CD4-positive, alpha-beta T cell (primary cell): ENCODE measurements at regions of chr14 and their contacts with region 1.

Region 1: GRCh38 chr14:52741865-52742264 is 11.9 kb downstream of the STYX start:
- DNase-seq: peak in 4 of 14 experiments; percentile 21 to 65 (median 46)
- ATAC-seq: peak; percentile 63
- H3K4me3 ChIP-seq: peak overlapping the region; percentile 41
- H3K4me3 Mint-ChIP-seq: peak overlapping the region; percentile 76
- H3K27ac ChIP-seq: peak overlapping the region; percentile 77 to 81
- H3K27ac Mint-ChIP-seq: peak overlapping the region; percentile 98
- H3K4me1 ChIP-seq: peaks cover 39% of the 10 kb centered on the region
- H3K4me1 Mint-ChIP-seq: peaks cover 83% of the 10 kb centered on the region
- H3K27me3 ChIP-seq: no peaks in the 10 kb centered on the region
- H3K27me3 Mint-ChIP-seq: no peaks in the 10 kb centered on the region
- CTCF ChIP-seq: no peak

Region 2: GRCh38 chr14:52552063-52552988 is 189.5 kb before region 1 on chr14 and contains the starts of genes GPR137C and TXNDC16:
- CTCF ChIA-PET with region 1: no interaction called
- POLR2A ChIA-PET with region 1: interaction called, 18 read pairs
- intact Hi-C with region 1: loop called in 1 of 2 experiments (anchors 5 kb)
- DNase-seq: peak; percentile 98 to 100 (median 99)
- ATAC-seq: peak; percentile 85
- H3K4me3 ChIP-seq: peak within 1 kb of the TSS; percentile 95
- H3K4me3 Mint-ChIP-seq: peak within 1 kb of the TSS; percentile 98
- H3K27ac ChIP-seq: peak within 1 kb of the TSS; percentile 80 to 88
- H3K27ac Mint-ChIP-seq: peak within 1 kb of the TSS; percentile 91
- H3K4me1 ChIP-seq: peaks cover 32% of the 10 kb centered on the region
- H3K4me1 Mint-ChIP-seq: peaks cover 39% of the 10 kb centered on the region
- H3K27me3 ChIP-seq: no peaks in the 10 kb centered on the region
- H3K27me3 Mint-ChIP-seq: peaks cover 15% of the 10 kb centered on the region
- CTCF ChIP-seq: no peak
- total RNA-seq, gene GPR137C: 0.08 to 0.19 TPM
- total RNA-seq, gene TXNDC16: 10.4 to 11.4 TPM

Region 3: GRCh38 chr14:52695481-52696091 is 46.3 kb before region 1 on chr14 and contains the start of gene ERO1A:
- CTCF ChIA-PET with region 1: no interaction called
- POLR2A ChIA-PET with region 1: interaction called, 42 read pairs
- intact Hi-C with region 1: loop called in 1 of 2 experiments (anchors 5 kb)
- DNase-seq: peak in 13 of 14 experiments; percentile 26 to 85 (median 49)
- ATAC-seq: peak; percentile 55
- H3K4me3 ChIP-seq: peak within 1 kb of the TSS; percentile 92
- H3K4me3 Mint-ChIP-seq: peak within 1 kb of the TSS; percentile 99
- H3K27ac ChIP-seq: peak within 1 kb of the TSS; percentile 54 to 91
- H3K27ac Mint-ChIP-seq: peak within 1 kb of the TSS; percentile 89
- H3K4me1 ChIP-seq: peaks cover 31% of the 10 kb centered on the region
- H3K4me1 Mint-ChIP-seq: peaks cover 44% of the 10 kb centered on the region
- H3K27me3 ChIP-seq: no peaks in the 10 kb centered on the region
- H3K27me3 Mint-ChIP-seq: no peaks in the 10 kb centered on the region
- CTCF ChIP-seq: no peak
- total RNA-seq, gene ERO1A: 58.6 to 60.7 TPM

Region 4: GRCh38 chr14:52724360-52724644 is 17.6 kb before region 1 on chr14:
- CTCF ChIA-PET with region 1: interaction called, 3 read pairs
- POLR2A ChIA-PET with region 1: interaction called, 113 read pairs
- intact Hi-C with region 1: no loop called
- DNase-seq: no peak
- ATAC-seq: peak; percentile 41
- H3K4me3 ChIP-seq: no peak overlapping the region
- H3K4me3 Mint-ChIP-seq: no peak overlapping the region
- H3K27ac ChIP-seq: no peak overlapping the region
- H3K27ac Mint-ChIP-seq: peak overlapping the region; percentile 58
- H3K4me1 ChIP-seq: peaks cover 3% of the 10 kb centered on the region
- H3K4me1 Mint-ChIP-seq: peaks cover 36% of the 10 kb centered on the region
- H3K27me3 ChIP-seq: no peaks in the 10 kb centered on the region
- H3K27me3 Mint-ChIP-seq: no peaks in the 10 kb centered on the region
- CTCF ChIP-seq: no peak

Region 5: GRCh38 chr14:52755607-52756253 is 13.9 kb after region 1 on chr14:
- CTCF ChIA-PET with region 1: interaction called, 3 read pairs
- POLR2A ChIA-PET with region 1: interaction called, 11 read pairs
- intact Hi-C with region 1: loop called in 1 of 2 experiments (anchors 2 kb)
- DNase-seq: no peak
- ATAC-seq: no peak
- H3K4me3 ChIP-seq: no peak overlapping the region
- H3K4me3 Mint-ChIP-seq: no peak overlapping the region
- H3K27ac ChIP-seq: no peak overlapping the region
- H3K27ac Mint-ChIP-seq: no peak overlapping the region
- H3K4me1 ChIP-seq: no peaks in the 10 kb centered on the region
- H3K4me1 Mint-ChIP-seq: no peaks in the 10 kb centered on the region
- H3K27me3 ChIP-seq: no peaks in the 10 kb centered on the region
- H3K27me3 Mint-ChIP-seq: no peaks in the 10 kb centered on the region
- CTCF ChIP-seq: no peak